Activated CD4-positive, alpha-beta T cell treated with anti-CD3 and anti-CD28 coated beads for 36 hours (primary cell): ENCODE measurements at regions of chr14 and their contacts with region 1.

Region 1: GRCh38 chr14:20632682-20633428 is 8.6 kb downstream of the OR6S1 start:
- DNase-seq: peak; percentile 88
- ATAC-seq: peak; percentile 85
- H3K4me3 Mint-ChIP-seq: peak overlapping the region; percentile 75
- H3K27ac Mint-ChIP-seq: peak overlapping the region; percentile 43
- H3K4me1 Mint-ChIP-seq: peaks cover 45% of the 10 kb centered on the region
- H3K27me3 Mint-ChIP-seq: peaks cover 10% of the 10 kb centered on the region

Region 2: DNA sequence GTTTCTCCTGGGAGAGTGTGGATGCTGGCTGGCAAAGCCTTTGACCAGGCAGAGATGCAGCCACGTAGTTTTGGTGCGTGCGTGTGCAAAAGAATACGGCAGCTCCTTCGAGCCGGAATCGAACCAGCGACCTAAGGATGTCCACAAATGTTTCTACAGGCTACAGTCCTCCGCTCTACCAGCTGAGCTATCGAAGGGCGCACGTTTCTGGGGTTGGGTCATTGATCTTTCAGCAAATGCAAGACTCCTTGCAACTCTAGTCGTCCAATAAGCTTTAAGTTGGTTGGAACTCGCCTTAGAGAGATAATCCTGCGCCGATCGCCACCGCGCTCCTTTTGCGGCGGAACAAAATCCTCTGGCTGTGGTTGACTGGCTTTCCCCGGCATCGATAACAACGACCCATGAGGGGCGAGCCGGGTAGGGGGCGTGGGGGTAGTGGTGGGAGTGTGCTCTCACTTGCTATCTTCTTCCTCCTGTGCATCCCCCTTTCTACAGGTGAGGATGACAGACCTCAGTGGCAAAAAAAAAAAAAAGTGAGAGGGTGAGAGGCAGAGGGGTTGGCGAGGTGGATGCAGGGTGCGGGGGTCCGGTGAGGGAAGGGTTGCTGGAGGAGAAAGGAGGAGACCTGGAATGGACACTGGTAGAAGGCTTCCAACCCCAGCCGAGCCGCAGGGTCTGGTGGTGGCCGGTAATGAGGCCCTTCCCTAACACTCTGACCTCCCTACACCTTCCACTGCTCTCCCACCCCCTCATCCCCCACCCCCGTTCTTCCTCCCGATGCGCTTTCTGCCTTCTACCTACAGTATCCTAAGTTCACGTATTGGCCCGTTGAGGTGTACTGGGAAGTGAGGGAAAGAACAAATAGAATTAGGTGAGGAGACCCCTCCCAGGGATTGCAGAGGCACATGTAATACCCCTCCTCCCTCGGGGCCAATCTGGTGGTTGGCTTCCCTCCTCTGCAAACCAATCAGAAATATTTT is 20.4 kb after region 1 on chr14:
- CTCF ChIA-PET with region 1: interaction called, 5 read pairs
- POLR2A ChIA-PET with region 1: interaction called, 4 read pairs
- intact Hi-C with region 1: loop called in 1 of 2 experiments (anchors 1 kb)
- DNase-seq: peak; percentile 86
- ATAC-seq: peak; percentile 88
- H3K4me3 Mint-ChIP-seq: peak overlapping the region; percentile 66
- H3K27ac Mint-ChIP-seq: no peak overlapping the region
- H3K4me1 Mint-ChIP-seq: peaks cover 16% of the 10 kb centered on the region
- H3K27me3 Mint-ChIP-seq: peaks cover 56% of the 10 kb centered on the region

Region 3: DNA sequence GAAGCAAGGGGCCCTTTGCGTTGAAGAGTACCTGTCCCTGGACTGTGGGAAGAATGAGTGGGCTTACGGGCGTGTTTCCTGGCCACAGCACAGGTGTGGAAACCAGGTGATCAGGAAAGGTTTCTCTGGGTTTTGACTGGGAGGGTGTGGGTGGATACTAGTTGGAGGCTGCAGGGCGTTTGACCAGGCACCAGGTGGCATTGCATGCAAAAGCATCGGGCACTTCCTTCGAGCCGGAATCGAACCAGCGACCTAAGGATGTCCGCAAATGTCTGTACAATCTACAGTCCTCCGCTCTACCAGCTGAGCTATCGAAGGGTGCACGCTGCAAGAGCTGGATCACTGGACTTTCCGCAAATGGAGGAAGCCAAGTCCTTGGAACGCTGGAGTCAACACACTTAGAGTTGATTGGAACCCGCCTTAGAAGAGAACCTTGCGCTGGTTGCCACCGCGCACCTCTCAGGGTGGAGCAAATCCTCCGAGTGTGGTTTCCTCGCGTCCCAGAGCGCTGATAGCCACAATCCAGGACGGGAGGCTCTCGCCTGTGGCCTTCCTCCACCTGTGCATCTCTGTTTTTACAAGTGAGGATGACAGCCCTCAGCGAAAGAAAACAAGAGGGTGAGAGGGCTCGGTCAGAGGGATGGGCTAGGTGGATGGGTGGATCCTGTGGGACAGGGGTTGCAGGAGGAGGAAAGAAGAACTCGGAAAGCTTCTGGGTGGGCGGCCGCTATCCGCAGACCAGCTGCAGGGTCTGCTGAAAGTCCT is 30.3 kb after region 1 on chr14:
- CTCF ChIA-PET with region 1: no interaction called
- POLR2A ChIA-PET with region 1: no interaction called
- intact Hi-C with region 1: loop called in 1 of 2 experiments (anchors 2 kb)
- DNase-seq: peak; percentile 93
- ATAC-seq: peak; percentile 88
- H3K4me3 Mint-ChIP-seq: peak overlapping the region; percentile 72
- H3K27ac Mint-ChIP-seq: peak overlapping the region; percentile 40
- H3K4me1 Mint-ChIP-seq: peaks cover 22% of the 10 kb centered on the region
- H3K27me3 Mint-ChIP-seq: peaks cover 2% of the 10 kb centered on the region